ENCODE measurements at regions of chr20 and their contacts with region 1.

Region 1: GRCh38 chr20:47317127-47317895 is 39.2 kb downstream of the ZMYND8 start:
- DNase-seq: peak; percentile 82
- H3K4me3 Mint-ChIP-seq: peak overlapping the region; percentile 63
- H3K27ac Mint-ChIP-seq: peak overlapping the region; percentile 91
- H3K4me1 Mint-ChIP-seq: peaks cover 47% of the 10 kb centered on the region
- H3K27me3 Mint-ChIP-seq: no peaks in the 10 kb centered on the region

Region 2: GRCh38 chr20:47356526-47357295 is 39.4 kb after region 1 on chr20 and contains the start of gene ZMYND8:
- intact Hi-C with region 1: loop called (anchors 5 kb)
- DNase-seq: peak; percentile 99
- H3K4me3 Mint-ChIP-seq: peak within 1 kb of the TSS; percentile 91
- H3K27ac Mint-ChIP-seq: peak within 1 kb of the TSS; percentile 99
- H3K4me1 Mint-ChIP-seq: peaks cover 30% of the 10 kb centered on the region
- H3K27me3 Mint-ChIP-seq: no peaks in the 10 kb centered on the region
- total RNA-seq, gene ZMYND8: 38.1 and 40.0 TPM in 2 replicates